ENCODE measurements at regions of chr3 and their contacts with region 1.

Region 1: GRCh38 chr3:72134989-72135451 is 350.1 kb upstream of the PROK2 start:
- DNase-seq: no peak
- ATAC-seq: no peak
- H3K4me3 ChIP-seq: no peak overlapping the region
- H3K27ac ChIP-seq: no peak overlapping the region
- H3K4me1 ChIP-seq: peaks cover 1 to 4% of the 10 kb centered on the region in 2 donors
- H3K27me3 ChIP-seq: no peaks in the 10 kb centered on the region
- CTCF ChIP-seq: no peak
- POLR2A ChIP-seq: no peak

Region 2: DNA sequence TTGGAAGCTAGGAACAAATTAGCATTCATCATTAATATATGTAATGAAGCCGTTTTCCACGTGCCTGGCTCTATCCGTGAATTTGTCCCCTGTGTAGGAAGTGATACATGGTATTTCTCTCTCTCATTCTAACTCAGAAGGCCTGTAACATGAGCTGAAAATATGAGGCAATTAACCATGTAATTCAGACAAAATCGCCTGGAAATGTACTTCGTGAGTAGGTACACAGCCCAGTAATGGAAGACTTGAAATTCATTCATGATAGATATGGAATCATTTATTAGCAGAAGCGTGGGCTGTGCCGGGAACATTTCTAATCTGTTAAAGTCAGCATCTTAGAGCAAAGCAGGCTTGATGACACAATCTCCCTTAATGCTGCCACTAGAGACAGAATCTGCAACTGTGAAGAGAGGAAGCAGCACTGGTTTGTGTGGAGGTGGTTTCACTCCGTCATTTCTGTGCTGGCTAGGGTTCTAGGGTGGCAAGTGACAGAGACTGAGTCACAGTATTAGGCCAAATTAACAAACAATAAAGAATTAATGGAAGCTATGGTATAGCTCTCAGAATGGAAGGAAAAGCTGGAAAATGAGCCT is 125.1 kb before region 1 on chr3:
- in situ Hi-C with region 1: no loop called
- intact Hi-C with region 1: no loop called
- DNase-seq: no peak
- ATAC-seq: no peak
- H3K4me3 ChIP-seq: no peak overlapping the region
- H3K27ac ChIP-seq: no peak overlapping the region
- H3K4me1 ChIP-seq: no peaks in the 10 kb centered on the region
- H3K27me3 ChIP-seq: no peaks in the 10 kb centered on the region
- CTCF ChIP-seq: no peak
- POLR2A ChIP-seq: no peak

Region 3: DNA sequence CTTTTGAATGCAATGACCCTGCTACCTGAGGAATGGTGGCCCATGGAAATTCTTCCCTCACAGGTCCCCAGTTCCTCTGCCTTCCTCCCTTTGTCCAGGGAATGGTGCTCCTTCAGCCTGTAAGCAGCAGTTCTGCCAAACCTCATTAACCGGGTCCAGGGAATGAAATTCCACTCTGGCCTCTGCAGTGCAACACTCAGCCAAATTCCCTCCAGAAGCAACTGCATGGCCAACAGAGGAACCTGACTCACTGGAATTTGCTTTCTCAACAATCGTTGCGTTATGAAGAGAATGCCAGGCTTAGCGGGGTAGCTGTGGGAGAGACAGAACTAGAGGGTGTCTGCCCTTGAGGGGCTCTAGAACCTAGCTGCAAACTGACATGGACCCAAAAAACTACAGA is 99.4 kb after region 1 on chr3:
- in situ Hi-C with region 1: no loop called
- intact Hi-C with region 1: loop called (anchors 10 kb)
- DNase-seq: peak; percentile 57 to 79
- ATAC-seq: peak; percentile 96 to 98
- H3K4me3 ChIP-seq: no peak overlapping the region
- H3K27ac ChIP-seq: peak overlapping the region in 1 of 4 donors; percentile 29
- H3K4me1 ChIP-seq: peaks cover 13 to 16% of the 10 kb centered on the region in 2 donors
- H3K27me3 ChIP-seq: no peaks in the 10 kb centered on the region
- CTCF ChIP-seq: no peak
- POLR2A ChIP-seq: no peak

Region 4: GRCh38 chr3:72462595-72463011 is 327.6 kb after region 1 on chr3:
- in situ Hi-C with region 1: no loop called
- intact Hi-C with region 1: no loop called
- DNase-seq: peak in 1 of 2 donors; percentile 31
- ATAC-seq: no peak
- H3K4me3 ChIP-seq: no peak overlapping the region
- H3K27ac ChIP-seq: no peak overlapping the region
- H3K4me1 ChIP-seq: peaks cover 6 to 15% of the 10 kb centered on the region in 2 donors
- H3K27me3 ChIP-seq: no peaks in the 10 kb centered on the region
- CTCF ChIP-seq: no peak
- POLR2A ChIP-seq: no peak

Measured in gastrocnemius medialis (tissue), 4 donors.